Activated CD4-positive, alpha-beta T cell treated with anti-CD3 and anti-CD28 coated beads for 36 hours (primary cell): ENCODE measurements at regions of chr14 and their contacts with region 1.

Region 1: GRCh38 chr14:51219473-51220448 is 20.3 kb upstream of the TMX1 start:
- DNase-seq: no peak
- ATAC-seq: no peak
- H3K4me3 Mint-ChIP-seq: no peak overlapping the region
- H3K27ac Mint-ChIP-seq: no peak overlapping the region
- H3K4me1 Mint-ChIP-seq: no peaks in the 10 kb centered on the region
- H3K27me3 Mint-ChIP-seq: no peaks in the 10 kb centered on the region

Region 2: GRCh38 chr14:50045039-50045711 is 1174.6 kb before region 1 on chr14:
- CTCF ChIA-PET with region 1: no interaction called
- POLR2A ChIA-PET with region 1: no interaction called
- intact Hi-C with region 1: no loop called
- DNase-seq: peak; percentile 83
- ATAC-seq: peak; percentile 79
- H3K4me3 Mint-ChIP-seq: peak overlapping the region; percentile 3
- H3K27ac Mint-ChIP-seq: peak overlapping the region; percentile 91
- H3K4me1 Mint-ChIP-seq: peaks cover 55% of the 10 kb centered on the region
- H3K27me3 Mint-ChIP-seq: no peaks in the 10 kb centered on the region

Region 3: GRCh38 chr14:50855558-50855957 is 364.2 kb before region 1 on chr14:
- CTCF ChIA-PET with region 1: no interaction called
- POLR2A ChIA-PET with region 1: no interaction called
- intact Hi-C with region 1: no loop called
- DNase-seq: no peak
- ATAC-seq: no peak
- H3K4me3 Mint-ChIP-seq: no peak overlapping the region
- H3K27ac Mint-ChIP-seq: no peak overlapping the region
- H3K4me1 Mint-ChIP-seq: peaks cover 22% of the 10 kb centered on the region
- H3K27me3 Mint-ChIP-seq: no peaks in the 10 kb centered on the region

Region 4: GRCh38 chr14:50954811-50955372 is 264.9 kb before region 1 on chr14:
- CTCF ChIA-PET with region 1: no interaction called
- POLR2A ChIA-PET with region 1: no interaction called
- intact Hi-C with region 1: loop called (anchors 2 to 10 kb)
- DNase-seq: no peak
- ATAC-seq: peak; percentile 63
- H3K4me3 Mint-ChIP-seq: no peak overlapping the region
- H3K27ac Mint-ChIP-seq: no peak overlapping the region
- H3K4me1 Mint-ChIP-seq: peaks cover 13% of the 10 kb centered on the region
- H3K27me3 Mint-ChIP-seq: no peaks in the 10 kb centered on the region

Region 5: GRCh38 chr14:52014601-52015267 is 795.0 kb after region 1 on chr14:
- CTCF ChIA-PET with region 1: no interaction called
- POLR2A ChIA-PET with region 1: interaction called, 16 read pairs
- intact Hi-C with region 1: no loop called
- DNase-seq: no peak
- ATAC-seq: no peak
- H3K4me3 Mint-ChIP-seq: no peak overlapping the region
- H3K27ac Mint-ChIP-seq: no peak overlapping the region
- H3K4me1 Mint-ChIP-seq: no peaks in the 10 kb centered on the region
- H3K27me3 Mint-ChIP-seq: peaks cover 5% of the 10 kb centered on the region